Heart left ventricle (tissue), 16 donors: ENCODE measurements at regions of chr15 and their contacts with region 1.

Region 1: DNA sequence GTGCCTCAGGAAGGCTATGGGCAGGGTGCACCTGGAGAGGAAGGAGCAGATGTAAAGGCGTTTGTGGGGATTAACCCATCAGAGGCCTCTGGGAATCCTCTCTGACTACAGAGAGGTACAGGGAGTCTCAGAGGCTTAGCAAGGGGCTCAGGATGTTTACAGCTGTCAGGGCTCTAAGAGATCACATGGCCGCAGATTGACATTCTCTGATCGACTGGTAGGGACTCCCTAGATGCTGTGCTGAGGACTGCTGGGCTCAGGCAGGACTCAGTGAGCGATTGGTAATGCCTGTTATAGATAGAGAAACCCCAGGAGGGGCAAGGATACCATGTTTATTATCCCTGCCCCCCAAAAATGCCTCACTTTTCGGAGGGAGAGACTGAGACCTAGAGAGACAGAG is 103.5 kb downstream of the CORO2B start:
- DNase-seq: no peak
- ATAC-seq: no peak
- H3K4me3 ChIP-seq: no peak overlapping the region
- H3K27ac ChIP-seq: no peak overlapping the region
- H3K4me1 ChIP-seq: peaks cover 0 to 25% (median 0%) of the 10 kb centered on the region in 12 donors
- H3K27me3 ChIP-seq: no peaks in the 10 kb centered on the region
- CTCF ChIP-seq: no peak
- POLR2A ChIP-seq: no peak

Region 2: GRCh38 chr15:68829068-68829467 is 146.7 kb after region 1 on chr15:
- intact Hi-C with region 1: loop called in 1 of 10 experiments (anchors 5 kb)
- DNase-seq: no peak
- ATAC-seq: peak in 3 of 4 donors; percentile 71 to 83 (median 81)
- H3K4me3 ChIP-seq: no peak overlapping the region
- H3K27ac ChIP-seq: no peak overlapping the region
- H3K4me1 ChIP-seq: peaks cover 0 to 12% (median 0%) of the 10 kb centered on the region in 12 donors
- H3K27me3 ChIP-seq: no peaks in the 10 kb centered on the region
- CTCF ChIP-seq: peak; percentile 39 to 68 (median 56)
- POLR2A ChIP-seq: no peak